ENCODE measurements at regions of chrX and their contacts with region 1.

Region 1: GRCh38 chrX:26409636-26410035 is 193.7 kb downstream of the MAGEB5 start:
- DNase-seq: no peak
- ATAC-seq: no peak
- H3K4me3 ChIP-seq: no peak overlapping the region
- H3K4me3 Mint-ChIP-seq: no peak overlapping the region
- H3K27ac ChIP-seq: no peak overlapping the region
- H3K27ac Mint-ChIP-seq: no peak overlapping the region
- H3K4me1 ChIP-seq: no peaks in the 10 kb centered on the region
- H3K4me1 Mint-ChIP-seq: no peaks in the 10 kb centered on the region
- H3K27me3 ChIP-seq: no peaks in the 10 kb centered on the region
- H3K27me3 Mint-ChIP-seq: no peaks in the 10 kb centered on the region
- CTCF ChIP-seq: no peak

Region 2: DNA sequence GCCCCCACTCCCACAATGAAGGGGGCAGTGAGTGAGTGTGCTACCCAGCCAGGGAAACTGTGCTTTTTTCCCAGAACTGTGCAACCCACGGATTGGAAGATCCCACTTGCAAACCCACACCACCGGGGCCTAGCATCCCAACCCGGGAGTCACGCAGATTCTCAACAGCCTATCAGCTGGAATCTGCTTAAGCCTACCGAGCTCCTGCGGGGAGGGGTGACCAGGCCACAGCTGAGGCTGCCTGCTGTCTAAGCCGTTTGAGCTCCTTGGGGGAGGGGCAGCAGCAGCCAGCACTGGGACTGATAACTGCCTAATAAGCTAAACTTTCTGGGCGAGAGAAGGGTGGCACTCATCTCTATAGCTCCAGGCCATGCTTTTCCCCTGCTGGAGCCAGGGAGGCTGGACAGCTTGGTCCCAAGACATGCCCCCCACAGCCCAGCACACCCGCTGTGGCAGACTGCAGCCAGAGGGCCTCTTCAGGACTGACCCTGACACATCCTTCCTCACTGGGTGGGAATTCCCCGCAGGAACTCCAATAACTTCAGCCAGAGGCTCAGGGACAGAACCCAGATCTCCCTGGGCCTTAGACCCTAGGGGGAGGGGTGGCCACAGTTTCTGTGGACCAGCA is 432.8 kb before region 1 on chrX:
- CTCF ChIA-PET with region 1: no interaction called
- POLR2A ChIA-PET with region 1: no interaction called
- intact Hi-C with region 1: loop called in 1 of 2 experiments (anchors 5 kb)
- DNase-seq: no peak
- ATAC-seq: no peak
- H3K4me3 ChIP-seq: no peak overlapping the region
- H3K4me3 Mint-ChIP-seq: no peak overlapping the region
- H3K27ac ChIP-seq: no peak overlapping the region
- H3K27ac Mint-ChIP-seq: no peak overlapping the region
- H3K4me1 ChIP-seq: no peaks in the 10 kb centered on the region
- H3K4me1 Mint-ChIP-seq: no peaks in the 10 kb centered on the region
- H3K27me3 ChIP-seq: no peaks in the 10 kb centered on the region
- H3K27me3 Mint-ChIP-seq: no peaks in the 10 kb centered on the region
- CTCF ChIP-seq: no peak

Region 3: DNA sequence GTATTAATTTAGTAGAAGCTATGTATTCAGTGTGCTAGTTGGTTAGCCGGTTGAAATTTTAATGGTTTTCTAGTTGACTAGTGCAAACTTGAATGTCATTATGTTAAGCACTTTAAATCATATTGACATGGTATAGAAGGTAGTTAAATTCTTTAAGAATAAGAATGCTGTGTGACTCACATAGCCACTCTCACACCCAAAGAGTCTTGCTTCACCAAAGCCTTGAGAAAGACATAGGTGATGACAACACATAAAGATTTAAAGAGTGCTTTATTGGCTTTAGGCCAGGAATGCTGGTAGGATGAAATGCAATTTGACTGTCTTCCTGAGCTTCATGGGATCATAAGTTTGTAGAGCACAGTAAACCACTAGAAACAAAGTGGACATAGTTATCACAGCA is 1265.9 kb after region 1 on chrX:
- CTCF ChIA-PET with region 1: no interaction called
- POLR2A ChIA-PET with region 1: no interaction called
- intact Hi-C with region 1: no loop called
- DNase-seq: no peak
- ATAC-seq: no peak
- H3K4me3 ChIP-seq: no peak overlapping the region
- H3K4me3 Mint-ChIP-seq: no peak overlapping the region
- H3K27ac ChIP-seq: no peak overlapping the region
- H3K27ac Mint-ChIP-seq: no peak overlapping the region
- H3K4me1 ChIP-seq: no peaks in the 10 kb centered on the region
- H3K4me1 Mint-ChIP-seq: no peaks in the 10 kb centered on the region
- H3K27me3 ChIP-seq: no peaks in the 10 kb centered on the region
- H3K27me3 Mint-ChIP-seq: no peaks in the 10 kb centered on the region
- CTCF ChIP-seq: no peak